ENCODE measurements at regions of chr7 and their contacts with region 1.

Region 1: DNA sequence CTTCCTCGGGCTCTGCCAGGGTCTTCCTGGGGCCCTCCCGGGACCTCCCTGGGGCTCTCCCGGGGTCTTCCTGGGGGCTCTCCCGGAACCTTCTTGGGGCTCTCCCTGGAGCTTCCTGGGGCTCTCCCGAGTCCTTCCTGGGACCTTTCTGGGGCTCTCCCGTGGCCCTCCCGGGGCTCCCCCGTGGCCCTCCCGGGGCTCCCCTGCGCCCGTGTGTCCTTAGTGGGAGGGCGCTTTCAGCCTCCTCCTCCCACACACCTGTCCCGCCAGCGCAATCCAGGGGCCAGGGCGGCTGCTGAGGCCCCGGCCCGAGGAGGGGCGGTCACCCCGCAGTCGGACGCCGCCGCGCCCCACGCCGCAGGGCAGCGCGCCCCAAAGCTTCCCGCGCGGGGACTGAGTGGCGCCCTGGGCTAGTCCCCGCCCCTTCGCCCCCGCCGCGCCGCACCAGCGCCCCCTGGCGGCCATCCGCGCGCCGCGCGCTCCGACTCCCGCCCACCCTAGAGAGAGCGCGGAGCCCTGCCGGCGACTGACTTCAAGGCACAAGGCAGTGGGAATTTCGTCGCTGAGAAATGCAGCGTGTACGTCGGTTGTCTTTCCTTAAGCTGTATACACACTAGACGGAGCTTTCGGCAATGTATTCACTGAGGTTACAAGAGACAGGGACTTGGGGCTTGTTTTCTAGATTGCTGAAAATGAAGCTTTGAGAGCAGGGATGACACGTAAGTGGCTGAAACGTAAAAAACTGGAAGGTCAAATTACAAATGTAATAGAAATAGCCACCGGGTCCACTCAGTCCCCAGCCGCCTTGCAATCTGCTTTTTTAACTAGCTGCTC is 47.1 kb downstream of the INSIG1 start:
- DNase-seq: peak; percentile 72
- ATAC-seq: peak; percentile 95
- H3K4me3 ChIP-seq: peak overlapping the region; percentile 64
- H3K27ac ChIP-seq: no peak overlapping the region
- H3K4me1 ChIP-seq: no peaks in the 10 kb centered on the region; the same call in 1 of the 2 replicates
- H3K27me3 ChIP-seq: peaks cover 12% of the 10 kb centered on the region; the same call in 1 of the 2 replicates
- CTCF ChIP-seq: peak; percentile 73

Region 2: DNA sequence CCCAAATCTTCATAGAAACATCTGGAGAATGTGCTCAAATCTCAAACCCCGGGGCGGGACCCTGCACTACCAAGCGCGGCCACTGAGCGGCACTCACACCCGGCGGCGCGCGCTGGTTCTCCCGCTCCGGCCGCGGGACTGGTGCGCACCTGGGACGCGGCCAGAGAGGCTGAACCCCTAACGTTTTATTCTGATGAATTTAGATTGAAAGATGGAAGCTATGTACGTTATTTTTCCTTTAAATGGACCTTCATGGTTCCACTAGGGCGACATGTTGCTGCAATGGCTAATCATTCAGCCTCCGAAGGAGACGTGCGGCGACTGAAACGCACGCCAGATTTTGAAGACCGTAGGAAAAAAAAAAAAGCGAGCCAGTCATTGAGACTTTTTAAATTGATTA is 154.1 kb before region 1 on chr7:
- CTCF ChIA-PET with region 1: no interaction called
- POLR2A ChIA-PET with region 1: no interaction called
- intact Hi-C with region 1: loop called (anchors 1 kb)
- DNase-seq: peak; percentile 39
- ATAC-seq: peak; percentile 57
- H3K4me3 ChIP-seq: peak overlapping the region; percentile 12; the same call in 1 of the 2 replicates
- H3K27ac ChIP-seq: no peak overlapping the region
- H3K4me1 ChIP-seq: peaks cover 18% of the 10 kb centered on the region
- H3K27me3 ChIP-seq: no peaks in the 10 kb centered on the region
- CTCF ChIP-seq: peak; percentile 84

Region 3: DNA sequence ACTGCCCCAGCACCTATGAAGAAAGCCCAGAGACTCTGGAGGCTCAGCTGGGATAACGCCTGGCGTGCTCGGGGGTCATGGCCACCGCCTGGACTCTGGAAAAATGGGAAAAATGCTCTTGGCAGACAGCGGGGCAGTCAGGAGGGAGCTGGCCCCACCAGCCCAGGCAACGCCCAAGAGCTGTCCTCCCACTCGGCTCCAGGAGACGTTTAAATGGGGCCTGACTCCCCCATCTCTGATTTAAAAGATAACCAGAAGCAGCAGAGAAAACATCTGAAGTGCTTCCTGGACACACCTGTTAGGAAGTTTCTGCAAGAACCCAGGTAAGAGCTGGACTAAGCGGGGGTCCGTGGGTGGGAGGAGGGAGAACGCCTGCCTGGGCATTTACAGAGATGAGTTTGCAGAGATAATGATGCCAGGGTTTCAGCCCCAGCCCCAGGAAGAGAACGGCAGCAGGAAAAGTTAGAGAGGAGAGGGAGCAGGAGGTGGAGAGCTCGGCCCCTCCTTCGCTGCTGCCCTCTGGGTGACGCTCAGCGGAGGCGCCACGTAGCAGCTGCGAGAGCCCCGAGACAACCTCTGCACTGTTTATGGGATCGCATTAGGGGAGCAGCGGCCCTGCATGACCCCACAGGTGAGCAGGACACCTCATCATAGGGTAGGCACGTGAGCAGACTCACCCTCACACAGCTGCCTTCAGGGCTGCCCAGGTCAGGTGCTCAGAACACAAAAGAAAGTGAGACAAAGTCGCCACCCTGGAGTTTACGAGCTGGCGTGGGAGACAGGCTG is 130.7 kb before region 1 on chr7:
- CTCF ChIA-PET with region 1: no interaction called
- POLR2A ChIA-PET with region 1: no interaction called
- intact Hi-C with region 1: no loop called
- DNase-seq: peak; percentile 43
- ATAC-seq: peak; percentile 75
- H3K4me3 ChIP-seq: peak overlapping the region; percentile 66
- H3K27ac ChIP-seq: peak overlapping the region; percentile 26
- H3K4me1 ChIP-seq: peaks cover 38% of the 10 kb centered on the region
- H3K27me3 ChIP-seq: no peaks in the 10 kb centered on the region
- CTCF ChIP-seq: no peak

Region 4: GRCh38 chr7:155234158-155234492 is 110.7 kb before region 1 on chr7:
- CTCF ChIA-PET with region 1: no interaction called
- POLR2A ChIA-PET with region 1: no interaction called
- intact Hi-C with region 1: no loop called
- DNase-seq: no peak
- ATAC-seq: no peak
- H3K4me3 ChIP-seq: no peak overlapping the region
- H3K27ac ChIP-seq: peak overlapping the region; percentile 70; the same call in 1 of the 2 replicates
- H3K4me1 ChIP-seq: peaks cover 44% of the 10 kb centered on the region
- H3K27me3 ChIP-seq: no peaks in the 10 kb centered on the region
- CTCF ChIP-seq: peak; percentile 32; the same call in 1 of the 2 replicates

Region 5: GRCh38 chr7:155252444-155252887 is 92.4 kb before region 1 on chr7:
- CTCF ChIA-PET with region 1: interaction called, 3 read pairs
- POLR2A ChIA-PET with region 1: no interaction called
- intact Hi-C with region 1: loop called (anchors 2 kb)
- DNase-seq: peak; percentile 29
- ATAC-seq: peak; percentile 50
- H3K4me3 ChIP-seq: no peak overlapping the region
- H3K27ac ChIP-seq: no peak overlapping the region
- H3K4me1 ChIP-seq: peaks cover 11% of the 10 kb centered on the region; the same call in 1 of the 2 replicates
- H3K27me3 ChIP-seq: no peaks in the 10 kb centered on the region
- CTCF ChIP-seq: peak; percentile 47; the same call in 1 of the 2 replicates

Region 6: DNA sequence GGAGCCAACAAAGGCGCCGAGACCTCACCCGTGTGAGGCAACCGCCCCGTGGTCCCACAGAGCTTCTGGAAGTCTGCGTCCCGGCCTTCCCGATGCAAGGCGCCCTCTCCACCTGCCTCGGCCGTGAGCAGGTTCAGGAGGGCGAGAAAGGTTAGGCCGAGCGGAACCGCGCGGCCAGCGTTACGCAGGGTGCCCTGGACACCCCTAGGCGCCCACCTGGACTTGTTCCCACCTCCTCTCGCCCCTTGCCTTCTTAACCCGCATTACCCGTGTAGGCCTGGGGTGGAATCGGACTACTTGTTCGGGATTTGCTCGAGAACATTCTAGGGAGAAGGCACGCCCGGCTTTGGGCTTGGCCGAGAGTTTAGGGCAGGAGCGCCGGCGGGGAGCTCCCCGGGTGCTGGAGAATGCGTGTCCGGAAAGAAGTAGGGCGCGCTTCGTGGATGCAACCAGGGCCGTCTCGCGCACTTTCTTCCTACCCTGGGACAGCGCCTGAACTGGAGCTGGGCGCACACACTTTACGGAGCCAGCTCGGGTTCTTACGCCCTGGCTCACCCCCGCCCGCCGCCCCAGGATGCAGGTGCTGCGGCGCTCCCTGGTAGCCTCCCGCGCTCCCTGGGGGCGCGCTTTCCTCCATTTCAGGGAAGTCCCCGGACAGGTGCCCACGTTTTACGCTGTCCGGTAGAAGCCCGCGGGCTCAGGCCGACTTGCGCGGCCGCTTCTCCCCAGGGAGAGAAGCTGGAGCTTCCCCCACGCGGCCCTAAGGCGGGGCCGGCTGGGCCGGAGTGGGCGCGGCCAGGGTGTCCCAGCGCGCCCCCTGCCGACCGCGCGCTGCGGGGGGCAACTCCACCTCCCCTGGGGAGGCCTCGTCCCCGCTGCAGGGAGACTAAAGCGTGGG is 27.3 kb after region 1 on chr7:
- CTCF ChIA-PET with region 1: no interaction called
- POLR2A ChIA-PET with region 1: no interaction called
- intact Hi-C with region 1: no loop called
- DNase-seq: no peak
- ATAC-seq: no peak
- H3K4me3 ChIP-seq: no peak overlapping the region
- H3K27ac ChIP-seq: no peak overlapping the region
- H3K4me1 ChIP-seq: no peaks in the 10 kb centered on the region
- H3K27me3 ChIP-seq: peaks cover 27% of the 10 kb centered on the region
- CTCF ChIP-seq: peak; percentile 45